A549 (cell line): ENCODE measurements at regions of chr5 and their contacts with region 1.

Region 1: DNA sequence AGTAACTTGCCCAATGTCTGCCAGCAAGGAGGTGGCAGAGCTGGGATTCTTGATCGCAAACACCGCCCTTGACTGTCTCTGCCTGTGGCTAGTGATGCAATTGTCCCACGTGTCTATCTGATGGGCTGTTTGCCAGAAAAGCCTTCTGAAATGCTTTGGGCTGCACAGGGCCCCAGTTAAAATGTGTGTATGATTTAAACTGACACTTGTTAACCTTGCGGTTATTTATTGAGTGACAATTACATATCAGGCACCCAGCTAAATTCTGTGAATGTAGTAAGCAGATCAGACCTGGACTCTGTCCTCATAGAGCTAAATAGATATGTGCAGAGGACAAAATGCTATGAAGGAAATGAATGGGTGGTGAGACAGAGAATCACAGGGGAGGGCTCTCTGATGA is 11.6 kb upstream of the IL12B start:
- DNase-seq: peak; percentile 61 to 76
- ATAC-seq: peak; percentile 79 to 80
- H3K4me3 ChIP-seq: no peak overlapping the region
- H3K27ac ChIP-seq: peak overlapping the region; percentile 8 to 65; a peak in 4 of 6 replicates
- H3K4me1 ChIP-seq: peaks cover 34% of the 10 kb centered on the region
- CTCF ChIP-seq: no peak
- EP300 ChIP-seq: peak in 1 of 2 experiments; percentile 17; a peak in 1 of 5 replicates
- POLR2A ChIP-seq: no peak
- RAD21 ChIP-seq: no peak

Region 2: DNA sequence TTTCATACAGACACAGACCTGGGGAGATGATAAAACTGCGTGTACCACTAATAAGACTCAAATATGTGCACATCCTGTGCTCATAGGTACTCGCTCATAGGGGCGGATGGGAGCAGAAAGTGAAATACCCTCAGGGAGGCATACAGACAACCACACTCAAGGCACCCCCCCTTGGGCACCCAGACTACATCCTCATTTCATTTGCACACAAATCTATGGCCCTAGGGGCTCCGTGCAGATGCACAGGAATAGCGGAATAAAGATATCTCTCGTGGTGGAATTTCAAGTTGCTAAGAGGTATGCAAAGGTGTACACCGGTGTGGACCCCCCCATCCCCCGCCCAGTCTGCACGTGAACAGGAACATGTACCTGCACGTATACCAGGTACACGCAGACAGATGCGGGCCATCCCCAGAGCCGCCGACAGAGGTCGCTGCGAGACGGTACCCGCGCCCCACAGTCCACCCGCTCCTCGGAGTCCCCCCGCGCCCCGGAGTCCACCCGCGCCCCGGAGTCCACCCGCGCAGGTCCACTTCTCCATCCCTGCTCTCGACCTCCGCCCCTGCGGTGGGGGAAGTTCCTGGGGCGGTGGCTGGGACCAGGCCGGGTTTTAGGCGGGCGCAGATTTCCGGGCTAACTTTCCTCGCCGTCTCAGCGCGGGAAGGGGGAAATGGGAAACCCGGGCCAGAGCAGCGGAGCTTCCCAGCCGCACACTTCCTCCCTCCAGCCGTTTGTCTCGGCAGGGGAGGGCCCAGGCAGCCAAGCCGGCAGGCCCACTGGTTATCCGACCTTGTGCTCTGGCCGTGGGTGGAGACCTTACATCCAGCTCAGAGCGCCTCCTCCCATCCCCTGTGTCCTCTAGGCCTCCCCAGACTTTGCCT is 10.6 kb before region 1 on chr5:
- CTCF ChIA-PET with region 1: interaction called, 16 read pairs
- POLR2A ChIA-PET with region 1: interaction called, 3 read pairs
- DNase-seq: peak; percentile 71 to 76
- ATAC-seq: peak; percentile 95 to 96
- H3K4me3 ChIP-seq: peak overlapping the region; percentile 53
- H3K27ac ChIP-seq: peak overlapping the region; percentile 88 to 96
- H3K4me1 ChIP-seq: peaks cover 21% of the 10 kb centered on the region; the same call in 2 of the 3 replicates
- CTCF ChIP-seq: peak; percentile 74
- EP300 ChIP-seq: no peak
- POLR2A ChIP-seq: no peak
- RAD21 ChIP-seq: peak; percentile 63 to 82